Lower leg skin (tissue), 4 donors: ENCODE measurements at regions of chrX and their contacts with region 1.

Region 1: DNA sequence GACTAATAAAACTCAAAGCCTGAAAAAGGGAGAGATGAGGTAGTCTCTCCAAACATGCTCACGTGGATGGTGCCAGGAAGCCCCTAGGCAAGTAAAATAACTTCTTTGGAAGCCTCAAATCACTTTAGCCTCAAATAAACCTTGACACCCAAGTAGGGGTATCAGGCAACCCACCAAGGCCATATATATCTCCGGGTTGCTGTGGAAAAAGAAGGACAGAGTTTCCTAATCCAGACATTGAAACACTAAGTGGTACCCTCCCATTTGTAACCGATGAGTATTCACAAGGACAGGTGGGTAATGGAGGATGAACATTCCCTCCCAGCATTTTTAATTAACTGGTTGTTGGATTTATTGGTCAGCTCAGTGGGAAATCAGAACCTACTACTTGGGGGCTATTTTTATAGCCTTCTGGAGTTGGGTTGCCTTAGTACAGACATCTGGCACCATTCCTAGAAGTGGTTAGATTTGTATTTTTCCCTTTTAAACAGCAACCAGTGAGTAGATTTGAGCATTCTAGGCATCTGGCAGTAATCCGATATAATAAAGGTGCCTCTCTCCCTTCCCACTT is 87.7 kb downstream of the GPC3 start:
- DNase-seq: no peak
- H3K4me3 ChIP-seq: no peak overlapping the region
- CTCF ChIP-seq: no peak
- POLR2A ChIP-seq: no peak

Region 2: GRCh38 chrX:133868682-133869081 is 29.0 kb before region 1 on chrX:
- intact Hi-C with region 1: no loop called
- DNase-seq: no peak
- H3K4me3 ChIP-seq: no peak overlapping the region
- CTCF ChIP-seq: no peak
- POLR2A ChIP-seq: no peak

Region 3: GRCh38 chrX:133921764-133922389 is 24.2 kb after region 1 on chrX:
- intact Hi-C with region 1: loop called (anchors 1 kb)
- DNase-seq: no peak
- H3K4me3 ChIP-seq: no peak overlapping the region
- CTCF ChIP-seq: no peak
- POLR2A ChIP-seq: no peak